ENCODE measurements at regions of chr9 and their contacts with region 1.

Region 1: GRCh38 chr9:31304576-31304975 is 1079.9 kb upstream of the ACO1 start:
- DNase-seq: peak; percentile 95
- H3K4me3 ChIP-seq: no peak overlapping the region
- H3K27ac ChIP-seq: peak overlapping the region; percentile 83
- H3K4me1 ChIP-seq: peaks cover 25% of the 10 kb centered on the region
- H3K27me3 ChIP-seq: no peaks in the 10 kb centered on the region
- CTCF ChIP-seq: no peak
- POLR2A ChIP-seq: peak; percentile 39

Region 2: GRCh38 chr9:31253800-31254762 is 50.5 kb before region 1 on chr9:
- CTCF ChIA-PET with region 1: no interaction called
- POLR2A ChIA-PET with region 1: no interaction called
- dilution Hi-C with region 1: no loop called
- intact Hi-C with region 1: no loop called
- DNase-seq: no peak
- H3K4me3 ChIP-seq: no peak overlapping the region
- H3K27ac ChIP-seq: no peak overlapping the region
- H3K4me1 ChIP-seq: no peaks in the 10 kb centered on the region
- H3K27me3 ChIP-seq: no peaks in the 10 kb centered on the region
- CTCF ChIP-seq: no peak
- POLR2A ChIP-seq: no peak

Region 3: DNA sequence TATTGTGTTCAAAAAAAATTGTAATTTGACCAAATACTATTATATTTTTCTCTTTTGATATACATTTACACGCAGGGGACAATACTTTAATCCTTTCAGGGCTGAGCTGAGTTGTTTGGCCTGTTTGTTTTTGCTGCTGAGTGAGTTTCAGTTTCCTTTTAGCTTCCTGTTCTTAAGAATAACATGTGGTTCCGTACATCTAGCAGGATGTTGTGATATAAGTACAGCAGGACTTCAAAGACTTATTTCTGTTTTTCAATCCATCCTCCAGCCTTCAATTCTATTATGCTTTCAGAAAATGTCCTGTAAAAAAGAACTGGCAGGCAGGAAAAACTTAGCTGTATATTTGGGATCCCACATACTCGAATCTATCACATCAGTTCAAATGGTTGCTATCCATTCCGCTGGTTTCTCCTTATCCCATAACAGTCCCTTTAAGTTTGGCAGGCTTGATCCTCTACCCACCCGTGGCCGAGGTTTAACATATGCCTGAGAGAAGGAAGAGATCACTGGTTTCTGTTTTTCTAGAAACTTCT is 42.6 kb after region 1 on chr9:
- CTCF ChIA-PET with region 1: interaction called, 11 read pairs
- POLR2A ChIA-PET with region 1: no interaction called
- dilution Hi-C with region 1: no loop called
- intact Hi-C with region 1: loop called (anchors 1 kb)
- DNase-seq: peak; percentile 83
- H3K4me3 ChIP-seq: peak overlapping the region in 1 of 3 experiments; percentile 58
- H3K27ac ChIP-seq: peak overlapping the region; percentile 73
- H3K4me1 ChIP-seq: peaks cover 21% of the 10 kb centered on the region
- H3K27me3 ChIP-seq: no peaks in the 10 kb centered on the region
- CTCF ChIP-seq: no peak
- POLR2A ChIP-seq: no peak

Measured in endothelial cell of umbilical vein (primary cell).